ENCODE measurements at regions of chr12 and their contacts with region 1.

Region 1: DNA sequence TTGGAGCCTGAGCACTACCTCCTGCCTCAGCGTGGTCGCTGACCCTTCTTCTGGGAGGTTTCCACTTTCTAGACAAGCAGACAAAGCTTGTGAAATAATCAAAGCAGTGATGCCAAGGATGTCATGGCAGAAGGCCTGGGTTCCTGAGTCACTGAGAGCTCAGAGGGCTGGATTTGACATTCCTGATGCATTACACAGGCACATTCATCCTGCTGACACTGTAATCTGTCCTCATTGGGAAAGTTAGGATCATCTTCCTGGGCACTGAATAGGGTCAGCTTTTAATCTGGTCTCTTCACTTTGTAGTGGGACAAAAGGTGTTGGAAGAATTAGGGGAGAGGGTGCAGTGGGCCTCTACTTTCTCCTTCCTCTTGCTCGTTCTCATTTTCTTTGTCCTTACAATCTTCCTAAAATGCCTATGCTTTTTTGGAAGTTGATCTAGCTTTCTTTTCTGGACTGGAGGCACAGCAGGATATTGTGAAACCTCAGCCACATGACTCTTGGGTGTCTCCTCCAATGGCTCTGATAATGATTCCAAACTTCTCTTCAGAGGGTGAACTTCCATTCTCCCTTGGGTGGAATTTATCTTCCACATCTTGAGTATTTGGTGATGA is 29.6 kb downstream of the EEA1 start:
- DNase-seq: no peak
- ATAC-seq: no peak
- H3K4me3 Mint-ChIP-seq: no peak overlapping the region
- H3K27ac Mint-ChIP-seq: no peak overlapping the region
- H3K4me1 Mint-ChIP-seq: peaks cover 33% of the 10 kb centered on the region
- H3K27me3 Mint-ChIP-seq: no peaks in the 10 kb centered on the region

Region 2: DNA sequence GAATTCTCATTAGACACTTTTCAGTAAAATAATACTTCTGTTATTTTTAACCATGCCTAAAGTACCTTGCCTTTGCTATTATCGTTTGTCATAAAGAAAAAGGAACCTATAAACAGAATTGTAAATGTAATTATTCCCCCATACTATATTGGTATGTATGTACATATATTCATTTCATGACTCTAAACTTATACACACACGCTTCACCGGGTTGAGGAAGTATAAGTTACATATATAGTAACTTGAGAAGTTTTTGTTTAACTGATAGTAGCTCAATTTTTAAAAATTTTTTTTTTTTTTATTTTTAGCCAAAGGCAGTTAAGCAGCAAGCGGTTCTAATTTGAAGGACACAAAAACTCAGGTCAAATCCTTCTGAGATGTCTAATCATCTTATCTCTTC is 89.1 kb before region 1 on chr12:
- CTCF ChIA-PET with region 1: no interaction called
- POLR2A ChIA-PET with region 1: interaction called, 12 read pairs
- intact Hi-C with region 1: no loop called
- DNase-seq: no peak
- ATAC-seq: no peak
- H3K4me3 Mint-ChIP-seq: no peak overlapping the region
- H3K27ac Mint-ChIP-seq: no peak overlapping the region
- H3K4me1 Mint-ChIP-seq: no peaks in the 10 kb centered on the region
- H3K27me3 Mint-ChIP-seq: no peaks in the 10 kb centered on the region